Activated B cell treated with CpG ODN at 0.5 μM for 24 hours (primary cell): ENCODE measurements at regions of chr11 and their contacts with region 1.

Region 1: DNA sequence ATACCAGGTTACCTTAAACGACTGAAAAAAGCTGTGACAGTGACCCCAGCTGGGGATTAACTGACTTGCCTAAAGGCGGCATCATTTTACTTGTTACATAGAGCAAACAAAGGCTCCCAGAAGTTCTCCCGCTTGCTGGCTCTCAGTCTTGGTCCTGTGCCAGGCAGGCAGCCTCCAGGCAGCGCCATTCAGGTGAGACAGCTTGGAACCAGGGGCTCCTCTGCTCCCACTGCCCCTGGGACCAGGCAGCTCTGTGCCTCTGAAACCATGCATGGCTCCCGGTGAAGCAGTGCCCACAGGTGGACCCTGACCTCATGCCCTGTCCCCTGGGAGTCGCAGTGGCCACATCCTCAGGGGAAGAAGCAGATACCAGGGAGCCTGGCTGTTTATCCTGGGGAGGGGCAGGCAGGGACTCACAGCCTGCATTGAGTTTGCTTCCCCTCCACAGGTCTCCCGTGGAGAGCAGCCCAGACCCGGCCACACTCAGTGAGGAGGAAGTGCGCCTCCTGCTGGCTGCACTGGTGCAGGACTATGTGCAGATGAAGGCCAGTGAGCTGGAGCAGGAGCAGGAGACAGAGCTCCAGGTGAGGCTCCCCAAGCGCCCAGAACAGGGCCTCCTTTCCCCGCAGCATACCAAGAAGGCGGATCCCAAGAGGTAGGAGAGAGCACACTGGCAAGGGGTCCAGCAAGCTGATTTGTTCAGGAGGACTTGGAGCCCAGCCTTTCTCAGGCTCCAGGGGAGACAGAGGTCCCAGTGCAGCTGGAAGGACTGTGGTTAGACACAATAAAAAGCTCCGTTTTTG is 15.6 kb upstream of the CYP2R1 start:
- DNase-seq: peak; percentile 73
- ATAC-seq: peak; percentile 47
- H3K4me3 Mint-ChIP-seq: no peak overlapping the region
- H3K27ac Mint-ChIP-seq: no peak overlapping the region
- H3K4me1 Mint-ChIP-seq: peaks cover 45% of the 10 kb centered on the region
- H3K27me3 Mint-ChIP-seq: peaks cover 2% of the 10 kb centered on the region
- CTCF ChIP-seq: no peak

Region 2: DNA sequence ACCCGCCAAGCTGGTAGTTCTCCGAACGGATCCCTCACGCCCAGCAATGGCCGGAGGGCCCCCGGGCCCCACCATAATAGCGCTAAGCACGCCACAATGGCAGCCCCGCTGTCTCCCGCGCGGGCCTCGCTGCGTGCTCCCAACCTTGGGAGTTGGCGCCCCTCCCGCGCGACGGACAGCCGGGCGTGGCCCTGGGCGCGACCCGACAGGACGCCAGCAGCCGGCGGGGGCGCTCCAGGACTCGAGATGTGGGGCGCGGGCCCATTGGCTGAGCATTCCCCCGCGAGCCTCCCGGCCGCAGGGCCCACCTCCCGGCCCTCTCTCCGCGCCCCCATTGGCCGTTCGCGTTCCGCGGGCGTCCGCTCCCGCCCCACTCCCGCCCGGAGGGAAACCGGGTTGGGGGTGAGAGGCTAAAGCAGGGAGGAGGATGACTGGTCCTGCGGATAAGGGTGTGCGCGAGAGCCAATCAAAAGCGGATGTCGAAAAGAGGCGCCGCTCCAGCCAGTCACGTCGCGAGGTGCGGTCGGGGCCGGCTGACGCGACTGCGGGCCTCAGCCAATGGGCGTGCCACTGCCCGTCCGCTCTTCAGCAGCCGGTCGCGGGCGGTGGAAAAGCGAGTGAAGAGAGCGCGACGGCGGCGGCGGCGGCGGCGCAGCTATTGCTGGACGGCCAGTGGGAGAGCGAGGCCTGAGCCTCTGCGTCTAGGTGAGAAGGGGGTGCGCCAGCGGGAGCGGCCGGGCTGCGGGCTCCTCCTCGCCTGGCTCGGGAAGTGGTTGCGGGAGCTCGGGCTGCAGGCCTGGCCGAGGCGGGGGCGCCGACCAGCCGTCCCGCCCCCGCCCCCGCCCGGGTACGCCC is 1239.3 kb before region 1 on chr11 and contains the start of gene FAR1:
- CTCF ChIA-PET with region 1: no interaction called
- POLR2A ChIA-PET with region 1: no interaction called
- intact Hi-C with region 1: loop called (anchors 5 kb)
- DNase-seq: peak; percentile 93
- ATAC-seq: peak; percentile 91
- H3K4me3 Mint-ChIP-seq: peak within 1 kb of the TSS; percentile 99
- H3K27ac Mint-ChIP-seq: peak within 1 kb of the TSS; percentile 95
- H3K4me1 Mint-ChIP-seq: peaks cover 44% of the 10 kb centered on the region
- H3K27me3 Mint-ChIP-seq: peaks cover 7% of the 10 kb centered on the region
- CTCF ChIP-seq: no peak
- total RNA-seq, gene FAR1: 39.2 and 48.4 TPM in 2 replicates

Region 3: DNA sequence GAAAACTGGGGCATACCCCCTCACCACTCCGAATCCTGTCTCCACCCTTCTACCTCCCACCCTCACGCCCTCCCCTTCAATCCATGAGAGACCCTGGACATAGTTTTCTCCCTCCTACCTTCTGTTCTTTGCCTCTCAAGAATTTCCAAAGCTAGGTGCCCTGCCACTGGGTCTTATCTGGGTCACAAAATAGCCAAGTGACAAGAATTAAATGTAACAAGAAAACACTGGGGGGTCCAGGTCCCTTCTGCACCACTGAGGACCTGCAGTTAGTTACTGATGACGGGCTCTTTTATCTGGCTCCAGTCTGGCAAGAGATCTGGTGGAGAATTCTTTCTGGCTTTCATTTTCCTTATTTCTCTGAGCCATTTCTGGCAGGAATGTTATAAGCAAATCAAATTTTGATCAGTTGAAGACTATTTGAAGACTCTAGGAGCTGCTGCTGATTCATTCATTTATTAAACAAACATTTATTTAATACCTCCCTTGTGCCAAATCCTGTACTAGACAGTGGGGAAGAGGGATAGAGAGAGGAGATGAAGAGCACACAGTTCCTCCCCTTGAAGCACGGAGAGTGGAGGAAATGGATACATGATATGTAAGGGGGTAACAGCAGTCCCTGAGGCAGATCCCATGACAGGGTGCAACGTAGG is 683.9 kb before region 1 on chr11:
- CTCF ChIA-PET with region 1: no interaction called
- POLR2A ChIA-PET with region 1: no interaction called
- intact Hi-C with region 1: no loop called
- DNase-seq: no peak
- ATAC-seq: no peak
- H3K4me3 Mint-ChIP-seq: no peak overlapping the region
- H3K27ac Mint-ChIP-seq: no peak overlapping the region
- H3K4me1 Mint-ChIP-seq: peaks cover 8% of the 10 kb centered on the region
- H3K27me3 Mint-ChIP-seq: peaks cover 9% of the 10 kb centered on the region
- CTCF ChIP-seq: no peak

Region 4: DNA sequence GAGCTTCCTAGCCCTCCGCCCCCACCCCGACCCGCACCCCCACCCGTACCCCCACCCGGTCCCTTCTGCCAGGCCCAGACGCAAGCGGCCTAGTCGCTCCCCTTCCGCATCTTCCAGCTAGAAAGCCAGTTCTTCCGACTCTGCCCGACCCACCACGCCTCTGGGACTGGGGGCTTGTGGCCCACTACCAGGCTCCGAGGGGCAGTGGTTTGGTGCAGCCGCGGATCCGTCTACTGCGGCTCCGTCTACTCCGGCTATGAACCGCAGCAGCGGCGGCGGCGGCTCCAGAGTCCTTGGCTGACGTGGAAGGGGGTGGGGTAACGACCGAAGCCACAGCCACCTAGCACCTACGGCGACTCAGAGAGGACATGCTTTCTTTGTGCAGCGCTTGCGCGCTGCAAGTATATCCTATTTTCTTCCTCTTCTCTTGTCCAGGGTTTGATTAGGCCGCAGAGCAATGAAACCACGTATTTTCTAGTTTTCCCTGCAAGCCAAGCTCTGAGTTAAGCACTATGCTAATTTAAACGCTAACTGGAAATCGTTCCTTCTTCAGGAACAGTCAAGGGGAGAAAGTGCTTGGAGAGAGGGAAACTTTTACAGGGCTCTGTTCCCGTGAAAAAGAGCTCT is 407.9 kb before region 1 on chr11 and contains the start of gene COPB1:
- CTCF ChIA-PET with region 1: interaction called, 12 read pairs
- POLR2A ChIA-PET with region 1: interaction called, 6 read pairs
- intact Hi-C with region 1: loop called (anchors 1 kb)
- DNase-seq: peak; percentile 81
- ATAC-seq: peak; percentile 95
- H3K4me3 Mint-ChIP-seq: peak within 1 kb of the TSS; percentile 100
- H3K27ac Mint-ChIP-seq: peak within 1 kb of the TSS; percentile 96
- H3K4me1 Mint-ChIP-seq: peaks cover 41% of the 10 kb centered on the region
- H3K27me3 Mint-ChIP-seq: no peaks in the 10 kb centered on the region
- CTCF ChIP-seq: no peak
- total RNA-seq, gene COPB1: 80.7 and 90.1 TPM in 2 replicates

Region 5: DNA sequence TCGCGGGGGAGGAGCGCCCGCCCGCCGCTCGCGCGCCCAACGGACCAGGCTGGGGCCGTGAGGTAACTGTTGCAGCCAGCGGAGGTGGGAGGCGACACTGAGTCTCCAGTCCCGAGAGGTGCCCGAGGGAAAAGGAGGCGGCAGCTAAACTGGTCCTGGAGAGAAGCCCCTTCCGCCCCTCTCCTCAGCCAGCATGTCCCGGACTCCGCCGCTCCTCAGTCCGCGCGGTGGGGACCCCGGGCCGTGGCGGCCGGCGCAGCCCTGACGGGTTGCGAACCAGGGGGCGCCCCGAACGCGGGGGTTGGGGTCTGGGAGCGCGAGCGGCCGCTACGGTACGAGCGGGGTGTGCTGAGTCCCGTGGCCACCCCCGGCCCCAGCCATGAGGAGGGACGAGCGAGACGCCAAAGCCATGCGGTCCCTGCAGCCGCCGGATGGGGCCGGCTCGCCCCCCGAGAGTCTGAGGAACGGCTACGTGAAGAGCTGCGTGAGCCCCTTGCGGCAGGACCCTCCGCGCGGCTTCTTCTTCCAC is 263.9 kb before region 1 on chr11 and contains the start of gene PDE3B:
- CTCF ChIA-PET with region 1: interaction called, 9 read pairs
- POLR2A ChIA-PET with region 1: interaction called, 14 read pairs
- intact Hi-C with region 1: loop called (anchors 1 kb)
- DNase-seq: peak; percentile 56
- ATAC-seq: peak; percentile 72
- H3K4me3 Mint-ChIP-seq: peak within 1 kb of the TSS; percentile 86
- H3K27ac Mint-ChIP-seq: no peak within 1 kb of the TSS
- H3K4me1 Mint-ChIP-seq: peaks cover 10% of the 10 kb centered on the region
- H3K27me3 Mint-ChIP-seq: peaks cover 17% of the 10 kb centered on the region
- CTCF ChIP-seq: no peak
- total RNA-seq, gene PDE3B: 11.3 and 13.4 TPM in 2 replicates

Region 6: GRCh38 chr11:14974515-14975251 is 67.1 kb after region 1 on chr11:
- CTCF ChIA-PET with region 1: interaction called, 19 read pairs
- POLR2A ChIA-PET with region 1: no interaction called
- intact Hi-C with region 1: loop called (anchors 1 kb)
- DNase-seq: no peak
- ATAC-seq: peak; percentile 51
- H3K4me3 Mint-ChIP-seq: peak overlapping the region; percentile 62
- H3K27ac Mint-ChIP-seq: no peak overlapping the region
- H3K4me1 Mint-ChIP-seq: peaks cover 30% of the 10 kb centered on the region
- H3K27me3 Mint-ChIP-seq: peaks cover 62% of the 10 kb centered on the region
- CTCF ChIP-seq: no peak

Region 7: DNA sequence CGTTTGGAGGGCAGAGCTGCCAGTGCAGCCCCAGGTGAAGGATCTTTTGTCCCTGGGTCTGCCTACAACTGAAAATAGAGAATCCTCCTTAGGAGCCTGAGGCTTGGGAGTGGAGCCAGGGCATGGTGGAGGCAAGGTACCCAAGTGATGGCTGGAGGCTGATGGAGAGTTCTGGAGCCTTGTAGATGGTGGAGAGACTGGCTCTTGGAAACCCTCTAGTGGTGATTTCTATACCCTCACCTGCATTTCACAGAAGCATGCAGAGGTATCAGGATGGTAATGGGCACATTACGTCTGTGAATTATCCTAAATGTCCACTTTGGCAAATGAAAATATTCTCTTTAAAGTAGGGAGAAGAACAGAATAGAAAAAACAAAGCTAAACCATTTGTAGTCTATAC is 251.5 kb after region 1 on chr11:
- CTCF ChIA-PET with region 1: interaction called, 11 read pairs
- POLR2A ChIA-PET with region 1: no interaction called
- intact Hi-C with region 1: no loop called
- DNase-seq: no peak
- ATAC-seq: no peak
- H3K4me3 Mint-ChIP-seq: no peak overlapping the region
- H3K27ac Mint-ChIP-seq: no peak overlapping the region
- H3K4me1 Mint-ChIP-seq: no peaks in the 10 kb centered on the region
- H3K27me3 Mint-ChIP-seq: no peaks in the 10 kb centered on the region
- CTCF ChIP-seq: no peak

Region 8: GRCh38 chr11:15275141-15275540 is 367.5 kb after region 1 on chr11:
- CTCF ChIA-PET with region 1: no interaction called
- POLR2A ChIA-PET with region 1: no interaction called
- intact Hi-C with region 1: no loop called
- DNase-seq: no peak
- ATAC-seq: no peak
- H3K4me3 Mint-ChIP-seq: no peak overlapping the region
- H3K27ac Mint-ChIP-seq: no peak overlapping the region
- H3K4me1 Mint-ChIP-seq: no peaks in the 10 kb centered on the region
- H3K27me3 Mint-ChIP-seq: peaks cover 16% of the 10 kb centered on the region
- CTCF ChIP-seq: no peak